ENCODE measurements at regions of chr1 and their contacts with region 1.

Region 1: DNA sequence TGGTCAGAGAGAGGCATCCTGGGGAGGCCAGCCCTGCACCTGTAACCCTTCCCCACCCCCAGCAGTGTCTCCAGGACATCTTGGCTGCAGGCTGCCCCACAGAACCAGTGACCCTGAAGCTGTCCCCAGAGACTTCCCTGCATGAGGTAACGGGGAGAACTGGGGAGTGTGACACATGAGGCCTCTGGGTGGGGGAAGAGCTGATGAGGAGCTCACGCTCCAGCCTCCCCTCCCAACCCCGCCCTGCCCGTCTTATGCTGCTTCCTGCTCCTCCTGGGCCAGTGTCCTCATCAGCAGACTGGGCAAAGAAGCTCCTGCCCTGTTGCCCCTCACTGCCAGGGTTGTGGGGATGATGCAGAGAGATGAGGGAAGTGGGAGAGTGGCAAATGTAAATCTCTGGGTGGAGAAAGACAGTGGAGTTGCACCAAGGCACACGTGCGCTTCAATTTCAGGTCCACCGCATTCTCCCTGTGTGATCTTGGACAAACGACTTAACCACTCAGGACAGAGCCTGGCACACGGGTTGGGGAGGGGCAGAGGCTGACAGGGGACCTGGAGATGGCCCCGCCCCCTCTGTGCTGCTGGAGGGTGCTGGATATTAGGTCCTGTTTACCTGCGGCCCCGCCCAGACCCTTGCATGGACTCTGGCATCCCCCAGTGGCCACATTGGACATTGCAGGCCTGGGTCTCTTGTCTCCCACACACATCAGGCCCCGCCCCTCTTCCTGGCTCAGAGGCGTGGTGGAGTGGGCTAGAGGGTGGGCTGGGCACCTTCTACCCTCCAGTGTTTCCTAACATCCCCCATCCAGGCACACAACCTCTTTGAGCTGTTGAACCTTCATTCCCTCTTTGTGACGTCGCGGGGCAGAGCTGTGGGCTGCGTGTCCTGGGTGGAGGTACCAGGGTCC is 12.3 kb downstream of the CLCNKB start:
- DNase-seq: peak; percentile 61 to 91 (median 82)

Region 2: GRCh38 chr1:15799004-15799936 is 256.6 kb before region 1 on chr1:
- intact Hi-C with region 1: loop called (anchors 10 kb)
- DNase-seq: peak in 17 of 42 donors; percentile 9 to 65 (median 24)

Region 3: GRCh38 chr1:15952317-15953258 is 103.3 kb before region 1 on chr1:
- intact Hi-C with region 1: no loop called
- DNase-seq: peak in 6 of 42 donors; percentile 3 to 33 (median 12)

Region 4: GRCh38 chr1:16009030-16009709 is 46.7 kb before region 1 on chr1:
- intact Hi-C with region 1: loop called (anchors 2 kb)
- DNase-seq: peak in 41 of 42 donors; percentile 65 to 93 (median 82)

Region 5: GRCh38 chr1:16032388-16033103 is 23.3 kb before region 1 on chr1:
- intact Hi-C with region 1: no loop called
- DNase-seq: peak; percentile 39 to 88 (median 72)

Region 6: DNA sequence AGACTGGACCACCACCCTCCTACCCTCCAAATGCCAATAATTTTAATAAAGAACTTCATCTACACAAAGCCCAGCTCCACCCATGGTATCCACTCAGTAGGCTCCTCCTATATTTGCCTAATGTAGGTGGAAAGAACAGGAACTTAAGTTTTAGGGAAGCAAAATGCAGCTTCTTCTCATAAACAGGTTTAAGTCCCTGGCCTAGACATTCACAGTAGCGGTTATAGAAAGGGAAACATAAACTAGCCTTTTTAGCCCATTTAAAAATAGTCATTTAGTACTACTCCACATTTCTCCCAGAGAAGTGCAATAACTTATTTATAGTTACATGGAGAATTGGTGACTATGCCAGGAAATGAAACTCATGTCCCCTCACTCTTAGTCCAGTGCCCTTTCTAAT is 237.7 kb after region 1 on chr1:
- intact Hi-C with region 1: no loop called
- DNase-seq: no peak

Measured in head of caudate nucleus (tissue), 42 donors.